Ovary (tissue), 10 donors: ENCODE measurements at regions of chr16 and their contacts with region 1.

Region 1: DNA sequence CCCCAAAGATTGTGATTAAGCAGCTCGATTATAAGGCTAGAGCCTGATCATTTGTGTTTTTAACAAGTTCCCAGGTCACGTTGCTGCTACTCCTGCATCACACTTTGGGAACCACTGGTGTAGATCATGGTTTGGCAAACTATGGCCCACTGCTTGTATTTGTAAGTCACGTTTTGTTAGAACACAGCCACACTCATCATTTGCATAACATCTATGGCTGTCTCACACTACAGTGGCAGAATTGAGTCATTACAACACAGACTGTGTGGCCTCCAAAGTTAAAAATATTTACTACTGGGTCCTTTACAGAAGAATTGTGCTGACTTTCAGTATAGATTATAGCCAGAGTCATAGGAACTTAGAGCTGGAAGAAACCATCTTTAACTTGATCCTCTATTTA is 515.3 kb upstream of the PSMD7 start:
- DNase-seq: no peak
- H3K4me3 ChIP-seq: no peak overlapping the region
- H3K27ac ChIP-seq: no peak overlapping the region
- H3K4me1 ChIP-seq: no peaks in the 10 kb centered on the region
- H3K27me3 ChIP-seq: no peaks in the 10 kb centered on the region
- CTCF ChIP-seq: no peak
- EP300 ChIP-seq: no peak
- POLR2A ChIP-seq: no peak

Region 2: GRCh38 chr16:73683804-73684203 is 97.5 kb before region 1 on chr16:
- intact Hi-C with region 1: no loop called
- DNase-seq: no peak
- H3K4me3 ChIP-seq: no peak overlapping the region
- H3K27ac ChIP-seq: no peak overlapping the region
- H3K4me1 ChIP-seq: no peaks in the 10 kb centered on the region
- H3K27me3 ChIP-seq: no peaks in the 10 kb centered on the region
- CTCF ChIP-seq: no peak
- EP300 ChIP-seq: no peak
- POLR2A ChIP-seq: no peak

Region 3: DNA sequence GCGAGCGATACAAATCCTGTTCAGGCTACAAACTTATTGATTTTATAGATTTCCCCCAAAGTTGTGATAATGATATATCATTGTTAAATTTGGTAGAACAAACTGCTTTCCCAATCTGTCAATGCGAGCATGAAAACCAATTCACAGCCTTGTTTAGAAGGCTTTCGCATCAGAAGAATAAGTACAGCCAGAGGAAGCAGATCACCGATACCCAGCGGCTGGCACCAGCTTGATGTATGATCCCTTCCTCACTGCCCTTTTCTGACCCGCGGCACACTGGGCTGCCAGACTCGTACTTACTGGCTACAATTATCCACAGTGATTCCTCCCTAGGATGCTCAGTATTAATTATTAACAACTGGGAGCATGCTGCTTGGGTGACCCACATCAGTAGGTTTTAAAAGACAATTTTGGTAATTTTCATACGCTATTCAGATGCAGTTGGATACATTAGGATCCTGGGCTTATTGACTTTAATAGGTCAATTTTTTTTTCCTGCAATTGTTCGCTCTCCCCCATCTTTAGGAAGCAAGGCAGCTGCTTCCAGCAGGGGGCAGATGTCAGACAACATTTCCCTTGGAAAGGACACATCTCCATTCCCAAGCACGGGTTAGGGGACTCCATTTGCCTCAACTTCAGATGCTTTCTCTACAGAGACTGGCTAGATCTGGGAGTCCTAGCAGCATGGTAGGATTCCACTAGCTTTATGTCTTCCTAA is 67.4 kb before region 1 on chr16:
- intact Hi-C with region 1: no loop called
- DNase-seq: no peak
- H3K4me3 ChIP-seq: no peak overlapping the region
- H3K27ac ChIP-seq: no peak overlapping the region
- H3K4me1 ChIP-seq: no peaks in the 10 kb centered on the region
- H3K27me3 ChIP-seq: no peaks in the 10 kb centered on the region
- CTCF ChIP-seq: peak in 1 of 3 donors; percentile 10
- EP300 ChIP-seq: no peak
- POLR2A ChIP-seq: no peak

Region 4: GRCh38 chr16:73768786-73769203 is 12.5 kb before region 1 on chr16:
- intact Hi-C with region 1: loop called in 1 of 4 experiments (anchors 2 kb)
- DNase-seq: peak in 1 of 5 donors; percentile 14
- H3K4me3 ChIP-seq: no peak overlapping the region
- H3K27ac ChIP-seq: no peak overlapping the region
- H3K4me1 ChIP-seq: peaks cover 1% of the 10 kb centered on the region
- H3K27me3 ChIP-seq: no peaks in the 10 kb centered on the region
- CTCF ChIP-seq: no peak
- EP300 ChIP-seq: no peak
- POLR2A ChIP-seq: no peak